CD4-positive, alpha-beta T cell (primary cell): ENCODE measurements at regions of chr4 and their contacts with region 1.

Region 1: GRCh38 chr4:4901877-4902276 is 42.4 kb downstream of the MSX1 start:
- DNase-seq: no peak
- ATAC-seq: no peak
- H3K4me3 ChIP-seq: no peak overlapping the region
- H3K4me3 Mint-ChIP-seq: no peak overlapping the region
- H3K27ac ChIP-seq: no peak overlapping the region
- H3K27ac Mint-ChIP-seq: no peak overlapping the region
- H3K4me1 ChIP-seq: no peaks in the 10 kb centered on the region
- H3K4me1 Mint-ChIP-seq: no peaks in the 10 kb centered on the region
- H3K27me3 ChIP-seq: no peaks in the 10 kb centered on the region
- H3K27me3 Mint-ChIP-seq: peaks cover 27% of the 10 kb centered on the region
- CTCF ChIP-seq: peak; percentile 7

Region 2: DNA sequence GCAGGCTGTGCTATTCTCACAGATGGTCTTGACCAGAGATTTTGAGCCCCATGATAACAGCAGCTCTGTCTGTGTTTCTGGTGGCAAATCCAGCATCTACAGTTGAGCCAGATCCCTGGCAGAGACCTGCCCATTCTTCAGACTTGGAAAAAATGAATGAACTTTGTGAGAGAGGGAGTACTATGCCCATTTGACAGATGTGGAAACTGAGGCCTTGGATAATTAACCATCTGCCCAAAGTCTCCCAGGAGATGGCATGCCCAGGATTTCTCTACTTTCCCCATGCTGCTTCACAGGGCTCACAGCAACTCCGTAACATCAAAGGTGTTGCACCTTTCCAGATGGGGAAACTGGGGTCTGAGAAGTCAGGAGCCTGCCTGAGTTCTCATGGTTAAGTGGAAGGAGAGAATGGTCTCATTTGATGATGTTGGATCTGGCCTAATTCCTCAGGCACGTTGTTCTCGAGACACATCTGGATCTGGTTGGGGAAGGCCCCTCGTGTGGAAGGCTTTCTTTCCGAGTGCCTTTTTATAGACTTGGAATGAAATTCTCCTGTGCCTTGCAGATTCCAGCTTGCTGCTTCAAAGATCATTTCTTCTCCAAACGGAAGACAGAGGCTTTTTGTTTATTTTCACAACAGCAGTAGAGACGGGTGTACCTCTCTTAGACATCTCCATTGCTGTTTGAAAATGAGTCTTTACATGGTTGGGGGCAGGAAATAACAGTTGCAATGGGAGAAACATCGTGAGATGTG is 286.8 kb before region 1 on chr4:
- CTCF ChIA-PET with region 1: no interaction called
- POLR2A ChIA-PET with region 1: no interaction called
- intact Hi-C with region 1: no loop called
- DNase-seq: no peak
- ATAC-seq: no peak
- H3K4me3 ChIP-seq: no peak overlapping the region
- H3K4me3 Mint-ChIP-seq: no peak overlapping the region
- H3K27ac ChIP-seq: no peak overlapping the region
- H3K27ac Mint-ChIP-seq: no peak overlapping the region
- H3K4me1 ChIP-seq: no peaks in the 10 kb centered on the region
- H3K4me1 Mint-ChIP-seq: no peaks in the 10 kb centered on the region
- H3K27me3 ChIP-seq: no peaks in the 10 kb centered on the region
- H3K27me3 Mint-ChIP-seq: no peaks in the 10 kb centered on the region
- CTCF ChIP-seq: no peak

Region 3: GRCh38 chr4:4859390-4859842 is 42.5 kb before region 1 on chr4 and contains the start of gene MSX1:
- CTCF ChIA-PET with region 1: no interaction called
- POLR2A ChIA-PET with region 1: no interaction called
- intact Hi-C with region 1: no loop called
- DNase-seq: peak in 5 of 14 experiments; percentile 9 to 57 (median 41)
- ATAC-seq: peak; percentile 61
- H3K4me3 ChIP-seq: peak within 1 kb of the TSS; percentile 53
- H3K4me3 Mint-ChIP-seq: peak within 1 kb of the TSS; percentile 89
- H3K27ac ChIP-seq: no peak within 1 kb of the TSS
- H3K27ac Mint-ChIP-seq: no peak within 1 kb of the TSS
- H3K4me1 ChIP-seq: peaks cover 47% of the 10 kb centered on the region
- H3K4me1 Mint-ChIP-seq: peaks cover 45% of the 10 kb centered on the region
- H3K27me3 ChIP-seq: peaks cover 77 to 90% of the 10 kb centered on the region in 2 experiments
- H3K27me3 Mint-ChIP-seq: peaks cover 88% of the 10 kb centered on the region
- CTCF ChIP-seq: no peak
- total RNA-seq, gene MSX1: not detected

Region 4: DNA sequence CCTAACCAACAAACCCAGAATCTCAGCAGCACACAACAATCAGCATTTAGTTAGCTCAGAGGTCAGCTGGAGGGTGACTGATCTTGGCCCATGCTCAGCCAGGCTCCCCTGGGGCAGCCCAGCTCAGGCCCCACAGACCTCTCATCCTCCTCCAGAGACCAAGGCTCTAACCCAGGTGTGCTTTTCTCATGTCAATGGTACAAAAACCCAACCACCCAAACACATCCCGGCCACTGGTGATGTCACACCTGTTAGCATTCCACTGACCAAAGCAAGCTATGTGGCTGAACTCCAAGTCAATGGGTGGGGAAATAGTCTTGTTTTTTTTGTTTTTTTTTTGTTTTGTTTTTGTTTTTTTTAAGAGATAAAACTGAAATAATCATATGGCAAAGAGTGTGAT is 39.9 kb after region 1 on chr4:
- CTCF ChIA-PET with region 1: no interaction called
- POLR2A ChIA-PET with region 1: no interaction called
- intact Hi-C with region 1: loop called in 1 of 2 experiments (anchors 1 kb)
- DNase-seq: no peak
- ATAC-seq: no peak
- H3K4me3 ChIP-seq: no peak overlapping the region
- H3K4me3 Mint-ChIP-seq: no peak overlapping the region
- H3K27ac ChIP-seq: no peak overlapping the region
- H3K27ac Mint-ChIP-seq: no peak overlapping the region
- H3K4me1 ChIP-seq: peaks cover 15% of the 10 kb centered on the region
- H3K4me1 Mint-ChIP-seq: peaks cover 24% of the 10 kb centered on the region
- H3K27me3 ChIP-seq: no peaks in the 10 kb centered on the region
- H3K27me3 Mint-ChIP-seq: peaks cover under 1% of the 10 kb centered on the region
- CTCF ChIP-seq: no peak